Gastrocnemius medialis (tissue), 4 donors: ENCODE measurements at regions of chr1 and their contacts with region 1.

Region 1: GRCh38 chr1:205719762-205720161 is 30.2 kb downstream of the NUCKS1 start:
- DNase-seq: no peak
- ATAC-seq: no peak
- H3K4me3 ChIP-seq: no peak overlapping the region
- H3K27ac ChIP-seq: no peak overlapping the region
- H3K4me1 ChIP-seq: no peaks in the 10 kb centered on the region
- H3K27me3 ChIP-seq: no peaks in the 10 kb centered on the region
- CTCF ChIP-seq: no peak
- POLR2A ChIP-seq: no peak

Region 2: DNA sequence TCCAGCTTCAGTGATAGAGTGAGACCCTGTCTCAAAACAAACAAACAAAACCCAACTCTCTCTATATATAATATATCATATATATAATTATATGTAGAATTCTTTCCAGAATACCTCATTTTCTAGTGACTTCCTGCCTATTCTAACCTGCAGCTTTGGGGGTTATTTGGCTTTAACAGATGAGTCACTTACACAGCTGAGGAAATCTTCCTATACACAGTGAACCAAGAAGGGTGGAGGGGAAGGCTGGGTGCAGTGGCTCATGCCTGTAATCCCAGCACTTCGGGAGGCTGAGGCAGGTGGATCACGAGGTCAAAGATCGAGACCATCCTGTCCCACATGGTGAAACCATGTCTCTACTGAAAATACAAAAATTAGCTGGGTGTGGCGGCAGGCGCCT is 46.3 kb after region 1 on chr1:
- in situ Hi-C with region 1: no loop called
- intact Hi-C with region 1: no loop called
- DNase-seq: no peak
- ATAC-seq: no peak
- H3K4me3 ChIP-seq: no peak overlapping the region
- H3K27ac ChIP-seq: no peak overlapping the region
- H3K4me1 ChIP-seq: no peaks in the 10 kb centered on the region
- H3K27me3 ChIP-seq: no peaks in the 10 kb centered on the region
- CTCF ChIP-seq: no peak
- POLR2A ChIP-seq: no peak

Region 3: DNA sequence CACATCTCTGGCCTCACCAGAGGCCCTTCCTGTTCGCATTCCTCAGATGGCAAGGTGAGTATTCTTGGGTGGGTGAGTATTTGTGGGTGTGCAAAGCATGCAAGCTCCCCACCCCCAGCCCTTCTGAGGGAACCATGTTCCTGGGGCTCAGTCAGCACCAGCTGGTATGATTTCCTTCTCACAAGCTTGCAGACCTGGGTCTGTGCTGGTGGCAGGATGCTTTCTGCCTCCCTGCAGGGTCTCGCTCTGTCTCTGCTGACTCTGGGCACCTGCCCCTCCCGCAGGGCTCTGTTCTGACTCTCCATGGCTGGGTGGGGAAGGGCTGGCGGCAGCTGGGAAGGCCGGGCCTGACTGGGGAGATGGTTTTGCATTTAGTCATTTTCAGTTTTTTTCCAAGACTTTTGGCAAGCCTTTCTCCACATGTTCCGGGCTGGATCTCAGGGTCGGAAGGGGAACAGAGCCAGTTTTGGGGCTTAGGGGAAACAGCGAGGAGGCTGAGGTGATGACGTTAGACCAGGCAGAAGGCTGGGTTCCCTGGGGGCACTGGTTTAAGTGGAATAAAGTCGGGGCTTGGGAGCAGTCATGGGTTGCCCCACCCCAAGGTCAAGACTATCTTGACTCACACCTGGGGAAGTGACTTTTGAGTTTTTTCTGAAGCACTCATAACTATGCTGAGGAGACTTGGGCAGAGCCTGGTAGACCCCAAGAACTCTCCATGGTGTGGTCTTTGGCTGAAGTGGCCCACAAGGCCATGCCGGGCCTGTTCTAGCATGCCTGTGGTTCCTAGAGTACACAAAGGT is 793.8 kb after region 1 on chr1:
- in situ Hi-C with region 1: no loop called
- intact Hi-C with region 1: loop called (anchors 5 kb)
- DNase-seq: peak in 1 of 2 donors; percentile 47
- ATAC-seq: peak; percentile 26 to 46
- H3K4me3 ChIP-seq: no peak overlapping the region
- H3K27ac ChIP-seq: no peak overlapping the region
- H3K4me1 ChIP-seq: peaks cover 0 to 2% of the 10 kb centered on the region in 2 donors
- H3K27me3 ChIP-seq: peaks cover 0 to 9% (median 1%) of the 10 kb centered on the region in 3 donors
- CTCF ChIP-seq: no peak
- POLR2A ChIP-seq: no peak